ENCODE measurements at regions of chr21 and their contacts with region 1.

Region 1: DNA sequence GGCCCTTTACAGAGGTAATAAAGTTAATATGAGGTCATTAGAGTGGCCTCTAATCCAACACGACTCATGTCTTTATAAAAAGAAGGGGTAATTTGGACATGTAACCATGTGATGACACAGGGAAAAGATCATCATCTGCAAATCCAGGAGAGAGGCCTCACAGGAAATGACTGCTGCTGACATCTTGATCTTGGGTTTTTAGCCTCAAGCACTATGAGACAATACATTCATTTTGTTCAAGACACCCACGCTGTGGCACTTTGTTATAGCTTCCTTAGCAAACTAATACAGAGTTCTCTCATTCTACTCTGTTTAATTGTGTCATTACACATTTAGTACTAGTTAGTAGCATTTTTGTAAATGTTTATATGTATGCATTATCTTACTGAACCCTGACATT is 64.0 kb upstream of the RUNX1 start:
- DNase-seq: no peak
- H3K4me3 Mint-ChIP-seq: no peak overlapping the region
- H3K27ac Mint-ChIP-seq: peak overlapping the region; percentile 44
- H3K4me1 Mint-ChIP-seq: peaks cover 19% of the 10 kb centered on the region
- H3K27me3 Mint-ChIP-seq: no peaks in the 10 kb centered on the region

Region 2: DNA sequence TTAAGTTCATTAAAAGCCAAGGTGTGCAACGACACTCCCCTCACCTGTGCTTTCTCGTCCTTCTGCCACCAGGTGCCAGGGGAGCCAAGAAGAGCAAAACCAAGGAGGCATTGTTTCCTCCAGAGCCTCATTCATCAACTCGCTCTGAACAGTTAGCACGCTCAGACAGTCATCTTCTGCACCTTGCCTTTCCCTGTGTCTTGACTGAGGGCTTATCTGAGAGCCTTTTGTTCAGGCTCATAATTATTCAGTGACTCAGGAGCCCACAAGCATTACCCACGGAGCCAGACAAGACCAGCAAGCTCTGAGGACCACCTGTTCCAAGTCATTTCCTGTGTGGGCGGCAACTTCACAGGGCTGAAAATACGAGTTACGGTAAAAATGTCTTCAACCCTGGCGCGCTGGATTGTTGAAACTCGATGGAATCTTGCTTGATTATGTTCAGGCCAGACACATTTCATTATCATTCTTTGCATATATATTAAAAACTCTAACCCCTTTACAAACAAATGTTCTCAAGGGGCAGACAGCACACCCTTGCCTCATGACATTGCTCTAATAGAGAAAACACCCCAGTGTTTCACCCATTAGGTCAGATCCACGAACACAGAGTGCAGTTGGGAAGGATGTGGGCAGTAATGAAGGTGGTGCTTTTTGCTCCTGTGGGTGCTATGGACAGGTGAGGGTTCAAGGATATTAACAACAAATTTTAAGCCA is 25.8 kb after region 1 on chr21:
- intact Hi-C with region 1: loop called (anchors 2 kb)
- DNase-seq: peak; percentile 10
- H3K4me3 Mint-ChIP-seq: peak overlapping the region; percentile 62
- H3K27ac Mint-ChIP-seq: peak overlapping the region; percentile 94
- H3K4me1 Mint-ChIP-seq: peaks cover 33% of the 10 kb centered on the region
- H3K27me3 Mint-ChIP-seq: no peaks in the 10 kb centered on the region

Measured in activated T-helper 2 cell treated with anti-CD3 and anti-CD28 coated beads, Interferon-gamma antibody, Interleukin-2, Interleukin-4, amounts not matched to agents 10 μg/mL and 5 μg/mL and 100 μg/mL, durations not matched to agents 14 hours and 24 hours and 36 hours (primary cell).